ENCODE measurements at regions of chr1 and their contacts with region 1.

Region 1: GRCh38 chr1:21622466-21623315 is 46.5 kb downstream of the RAP1GAP start:
- DNase-seq: peak; percentile 75
- ATAC-seq: peak; percentile 85
- H3K4me3 Mint-ChIP-seq: peak overlapping the region; percentile 35
- H3K27ac Mint-ChIP-seq: no peak overlapping the region
- H3K4me1 Mint-ChIP-seq: peaks cover 2% of the 10 kb centered on the region
- H3K27me3 Mint-ChIP-seq: peaks cover 21% of the 10 kb centered on the region

Region 2: DNA sequence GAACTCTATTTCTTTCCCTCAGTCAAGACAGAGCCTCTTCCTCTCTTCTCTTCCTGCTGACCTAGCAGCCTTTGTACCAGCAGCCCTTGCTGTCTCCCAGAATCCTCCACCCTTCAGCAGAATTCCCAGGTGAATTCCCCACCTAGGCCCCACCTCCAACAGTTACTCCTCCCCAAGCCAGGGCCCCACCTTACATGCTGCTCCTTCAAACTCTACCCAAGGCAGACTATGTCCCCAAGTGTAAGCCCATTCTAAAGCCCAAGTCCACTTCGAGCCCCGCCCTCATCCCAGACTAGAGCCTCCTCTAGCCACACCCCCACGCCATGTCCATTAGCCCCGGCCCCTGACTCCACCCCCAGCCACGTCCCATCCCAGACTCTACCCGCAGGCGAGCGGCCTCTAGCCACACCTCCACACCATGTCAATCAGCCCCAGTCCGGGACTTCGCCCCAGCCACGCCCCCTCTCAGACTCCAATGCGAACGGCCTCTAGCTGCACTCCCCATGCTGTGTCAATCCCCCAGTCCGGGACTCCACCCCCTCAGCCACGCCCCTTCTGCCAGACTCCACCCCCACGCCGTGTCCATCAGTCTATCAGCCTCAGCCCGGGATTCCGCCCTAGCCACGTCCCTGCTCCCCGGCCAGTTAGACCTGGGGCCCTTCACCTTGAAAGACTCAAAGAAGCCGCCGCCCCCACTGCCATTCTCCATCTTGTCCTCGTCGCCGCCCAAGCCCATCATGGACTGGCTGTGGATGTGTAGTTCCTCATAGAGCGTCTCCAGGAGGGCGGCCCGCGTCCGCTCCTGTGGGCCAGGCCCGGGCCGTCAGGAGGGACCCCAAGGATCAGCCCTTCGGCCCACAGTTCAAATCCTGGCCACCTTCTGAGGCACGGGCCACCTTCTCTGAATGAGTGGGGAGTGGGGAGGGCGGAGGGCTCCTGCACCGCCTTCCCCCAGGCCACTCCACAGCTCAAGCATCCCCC is 14.9 kb before region 1 on chr1:
- CTCF ChIA-PET with region 1: interaction called, 3 read pairs
- POLR2A ChIA-PET with region 1: no interaction called
- intact Hi-C with region 1: loop called in 1 of 2 experiments (anchors 1 kb)
- DNase-seq: peak; percentile 86
- ATAC-seq: peak; percentile 97
- H3K4me3 Mint-ChIP-seq: no peak overlapping the region
- H3K27ac Mint-ChIP-seq: no peak overlapping the region
- H3K4me1 Mint-ChIP-seq: peaks cover 8% of the 10 kb centered on the region
- H3K27me3 Mint-ChIP-seq: peaks cover 9% of the 10 kb centered on the region

Measured in activated CD4-positive, alpha-beta T cell treated with anti-CD3 and anti-CD28 coated beads for 36 hours (primary cell).